ENCODE measurements at regions of chr4 and their contacts with region 1.

Region 1: DNA sequence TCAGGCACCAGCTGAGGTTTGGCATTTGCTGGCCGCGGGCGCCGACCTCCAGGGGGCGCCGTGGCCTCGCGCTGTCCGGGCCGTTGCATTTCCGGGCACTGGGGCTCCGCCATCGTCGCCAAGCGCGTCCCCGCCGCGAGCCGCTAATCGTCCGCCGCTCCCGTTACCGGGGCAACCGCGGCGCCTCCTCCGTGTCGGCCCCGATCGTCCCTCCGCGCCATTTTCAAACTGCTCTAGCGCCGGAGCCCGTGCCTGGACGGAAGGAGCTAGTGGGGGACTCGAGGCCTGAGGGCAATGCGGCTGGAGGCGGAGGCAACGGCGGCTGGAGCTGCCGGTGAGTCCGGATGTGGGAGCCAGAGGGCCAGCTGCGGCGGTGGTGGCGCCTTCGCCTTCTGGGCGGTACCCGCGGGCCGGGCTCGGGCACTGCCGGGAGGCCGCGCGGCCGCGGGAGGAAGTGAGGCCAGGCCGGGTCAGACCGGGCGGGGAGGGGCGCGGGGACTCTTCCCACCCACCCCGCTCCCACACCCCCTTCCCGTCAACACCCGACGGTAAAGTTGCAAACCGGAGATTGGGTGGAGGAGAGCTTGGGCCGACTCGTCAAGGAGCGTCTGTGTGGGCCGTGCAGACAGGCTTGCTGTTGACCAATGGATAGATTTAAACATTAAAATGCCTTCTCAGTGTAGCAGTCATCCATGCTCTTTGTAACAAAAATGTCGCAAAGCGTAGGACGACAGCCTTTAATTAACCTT is at the start of gene CEP135:
- H3K4me3 ChIP-seq: peak within 1 kb of the TSS; percentile 96
- H3K27ac ChIP-seq: peak within 1 kb of the TSS; percentile 85
- H3K4me1 ChIP-seq: peaks cover 4% of the 10 kb centered on the region; the same call in 1 of the 2 replicates
- CTCF ChIP-seq: peak; percentile 95

Region 2: DNA sequence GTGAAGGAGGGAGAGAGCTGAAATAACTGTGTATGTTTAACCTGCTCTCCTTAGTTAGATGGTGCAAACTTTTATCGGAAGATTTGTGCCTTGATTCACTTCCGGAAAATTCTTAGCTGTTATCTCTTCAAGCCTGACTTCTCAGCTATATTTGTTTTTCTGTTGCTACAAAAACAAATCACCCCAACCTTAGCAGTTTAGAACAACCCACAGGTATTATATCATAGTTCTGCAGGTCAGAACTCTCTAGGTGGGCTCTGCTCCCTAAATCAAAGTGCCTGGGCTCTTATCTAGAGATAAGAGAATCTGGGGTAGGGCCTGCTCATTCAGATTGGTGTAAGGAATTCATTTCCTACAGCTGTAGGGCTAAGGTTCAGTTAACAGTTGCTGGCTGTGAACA is 15.3 kb before region 1 on chr4:
- CTCF ChIA-PET with region 1: interaction called, 21 read pairs
- POLR2A ChIA-PET with region 1: no interaction called
- H3K4me3 ChIP-seq: no peak overlapping the region
- H3K27ac ChIP-seq: no peak overlapping the region
- H3K4me1 ChIP-seq: no peaks in the 10 kb centered on the region
- CTCF ChIP-seq: no peak

Measured in HEK293 (cell line).